Activated CD4-positive, alpha-beta memory T cell treated with anti-CD3 and anti-CD28 coated beads for 36 hours (primary cell): ENCODE measurements at regions of chr14 and their contacts with region 1.

Region 1: GRCh38 chr14:75660630-75661494 is at the starts of genes ERG28 and TTLL5:
- DNase-seq: peak; percentile 98
- H3K4me3 Mint-ChIP-seq: peak within 1 kb of the TSS; percentile 96
- H3K27ac Mint-ChIP-seq: peak within 1 kb of the TSS; percentile 90
- H3K4me1 Mint-ChIP-seq: peaks cover 34% of the 10 kb centered on the region
- H3K27me3 Mint-ChIP-seq: no peaks in the 10 kb centered on the region
- total RNA-seq, gene ERG28: 25.9 to 26.8 TPM
- total RNA-seq, gene TTLL5: 23.6 to 28.4 TPM

Region 2: GRCh38 chr14:75176142-75176820 is 484.6 kb before region 1 on chr14 and contains the start of gene TMED10:
- CTCF ChIA-PET with region 1: no interaction called
- POLR2A ChIA-PET with region 1: no interaction called
- intact Hi-C with region 1: loop called (anchors 5 kb)
- DNase-seq: peak; percentile 94
- H3K4me3 Mint-ChIP-seq: peak within 1 kb of the TSS; percentile 86
- H3K27ac Mint-ChIP-seq: peak within 1 kb of the TSS; percentile 98
- H3K4me1 Mint-ChIP-seq: peaks cover 42% of the 10 kb centered on the region
- H3K27me3 Mint-ChIP-seq: no peaks in the 10 kb centered on the region
- total RNA-seq, gene TMED10: 189 to 201 TPM

Region 3: GRCh38 chr14:75497191-75497590 is 163.7 kb before region 1 on chr14:
- CTCF ChIA-PET with region 1: no interaction called
- POLR2A ChIA-PET with region 1: no interaction called
- intact Hi-C with region 1: loop called (anchors 2 kb)
- DNase-seq: peak; percentile 75
- H3K4me3 Mint-ChIP-seq: peak overlapping the region; percentile 59
- H3K27ac Mint-ChIP-seq: peak overlapping the region; percentile 82
- H3K4me1 Mint-ChIP-seq: peaks cover 54% of the 10 kb centered on the region
- H3K27me3 Mint-ChIP-seq: no peaks in the 10 kb centered on the region

Region 4: DNA sequence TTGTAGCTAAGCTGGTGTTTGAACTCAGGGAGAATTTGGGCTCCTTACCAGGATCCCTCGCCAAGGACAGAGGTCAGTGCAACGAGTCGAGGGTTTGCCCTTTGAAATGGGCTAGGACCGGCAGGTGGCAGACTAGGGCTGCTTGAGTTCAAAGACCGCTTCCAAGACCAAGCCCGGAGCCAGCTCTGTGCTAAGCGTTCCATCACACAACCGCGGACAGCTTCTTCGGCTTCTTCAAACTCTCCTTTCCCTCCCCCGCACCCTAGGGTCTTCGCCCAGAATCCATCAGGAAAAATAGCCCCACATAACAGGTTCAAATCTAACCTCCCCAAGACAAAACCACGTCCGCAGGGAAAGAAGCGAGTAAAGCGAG is 83.1 kb before region 1 on chr14:
- CTCF ChIA-PET with region 1: interaction called, 336 read pairs
- POLR2A ChIA-PET with region 1: interaction called, 9 read pairs
- intact Hi-C with region 1: no loop called
- DNase-seq: peak; percentile 87
- H3K4me3 Mint-ChIP-seq: peak overlapping the region; percentile 86
- H3K27ac Mint-ChIP-seq: peak overlapping the region; percentile 88
- H3K4me1 Mint-ChIP-seq: peaks cover 13% of the 10 kb centered on the region
- H3K27me3 Mint-ChIP-seq: no peaks in the 10 kb centered on the region

Region 5: DNA sequence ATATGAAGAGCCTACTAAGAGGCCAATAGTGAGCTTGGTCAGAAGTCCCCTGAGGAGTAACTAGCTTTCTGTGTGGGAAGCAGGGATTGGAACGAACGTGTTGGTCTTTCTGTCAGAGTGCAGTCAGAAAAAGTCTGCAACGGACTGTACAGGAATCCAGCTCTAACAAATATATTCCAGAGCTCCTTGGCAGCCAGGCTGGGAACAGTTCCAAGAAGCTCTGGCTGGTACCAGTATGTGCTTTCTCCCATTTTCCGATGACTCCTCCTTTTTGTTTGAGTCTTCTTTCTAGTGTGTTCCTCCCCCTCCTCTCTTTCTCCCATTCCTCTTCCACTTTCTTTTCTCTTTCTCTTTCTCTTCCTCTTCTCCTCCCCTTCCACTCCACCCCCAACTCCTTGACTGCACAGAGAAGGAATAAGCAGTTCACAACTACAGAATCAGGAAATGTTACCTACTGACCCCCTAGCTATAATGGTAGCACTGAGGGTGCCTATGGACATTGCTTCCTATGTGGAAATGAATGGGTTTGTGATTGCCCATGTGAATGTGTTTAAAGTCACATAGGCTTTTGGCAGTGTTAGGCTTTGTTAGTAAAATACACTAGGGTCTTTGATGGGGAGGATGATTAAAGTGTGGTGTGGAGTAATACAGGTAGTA is 60.1 kb after region 1 on chr14:
- CTCF ChIA-PET with region 1: no interaction called
- POLR2A ChIA-PET with region 1: no interaction called
- intact Hi-C with region 1: no loop called
- DNase-seq: no peak
- H3K4me3 Mint-ChIP-seq: no peak overlapping the region
- H3K27ac Mint-ChIP-seq: no peak overlapping the region
- H3K4me1 Mint-ChIP-seq: peaks cover 13% of the 10 kb centered on the region
- H3K27me3 Mint-ChIP-seq: no peaks in the 10 kb centered on the region

Region 6: DNA sequence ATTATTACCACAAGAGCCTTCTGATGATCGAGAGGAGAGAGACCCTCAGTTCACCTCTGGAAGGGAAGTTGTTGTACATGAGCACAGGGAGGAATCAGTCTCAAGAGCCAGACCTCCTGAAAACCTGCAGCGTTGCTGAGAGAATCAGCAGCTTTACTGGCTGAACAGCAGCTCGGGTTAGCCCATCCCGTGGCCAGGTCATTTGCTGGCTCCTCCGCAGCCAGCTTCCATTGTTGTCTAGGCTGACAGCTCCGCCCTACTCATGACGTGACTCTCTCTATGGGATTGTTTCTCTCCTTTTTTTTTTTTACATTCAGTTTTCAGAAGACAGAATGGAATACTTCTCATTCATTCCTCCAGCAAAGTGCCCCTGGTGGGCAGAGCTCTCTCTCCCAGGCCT is 251.0 kb after region 1 on chr14:
- CTCF ChIA-PET with region 1: no interaction called
- POLR2A ChIA-PET with region 1: no interaction called
- intact Hi-C with region 1: no loop called
- DNase-seq: no peak
- H3K4me3 Mint-ChIP-seq: no peak overlapping the region
- H3K27ac Mint-ChIP-seq: no peak overlapping the region
- H3K4me1 Mint-ChIP-seq: no peaks in the 10 kb centered on the region
- H3K27me3 Mint-ChIP-seq: no peaks in the 10 kb centered on the region

Region 7: GRCh38 chr14:75941030-75941429 is 280.2 kb after region 1 on chr14:
- CTCF ChIA-PET with region 1: no interaction called
- POLR2A ChIA-PET with region 1: no interaction called
- intact Hi-C with region 1: no loop called
- DNase-seq: no peak
- H3K4me3 Mint-ChIP-seq: no peak overlapping the region
- H3K27ac Mint-ChIP-seq: no peak overlapping the region
- H3K4me1 Mint-ChIP-seq: no peaks in the 10 kb centered on the region
- H3K27me3 Mint-ChIP-seq: no peaks in the 10 kb centered on the region

Region 8: GRCh38 chr14:75982266-75983018 is 321.6 kb after region 1 on chr14:
- CTCF ChIA-PET with region 1: interaction called, 7 read pairs
- POLR2A ChIA-PET with region 1: interaction called, 5 read pairs
- intact Hi-C with region 1: loop called (anchors 1 kb)
- DNase-seq: peak; percentile 84
- H3K4me3 Mint-ChIP-seq: peak overlapping the region; percentile 72
- H3K27ac Mint-ChIP-seq: no peak overlapping the region
- H3K4me1 Mint-ChIP-seq: peaks cover 47% of the 10 kb centered on the region
- H3K27me3 Mint-ChIP-seq: peaks cover 2% of the 10 kb centered on the region

Region 9: GRCh38 chr14:76151398-76152339 is 490.8 kb after region 1 on chr14 and contains the start of gene GPATCH2L:
- CTCF ChIA-PET with region 1: no interaction called
- POLR2A ChIA-PET with region 1: no interaction called
- intact Hi-C with region 1: loop called (anchors 2 kb)
- DNase-seq: peak; percentile 99
- H3K4me3 Mint-ChIP-seq: peak within 1 kb of the TSS; percentile 93
- H3K27ac Mint-ChIP-seq: peak within 1 kb of the TSS; percentile 96
- H3K4me1 Mint-ChIP-seq: peaks cover 49% of the 10 kb centered on the region
- H3K27me3 Mint-ChIP-seq: no peaks in the 10 kb centered on the region
- total RNA-seq, gene GPATCH2L: 50.1 to 52.1 TPM